ENCODE measurements at regions of chr11 and their contacts with region 1.

Region 1: GRCh38 chr11:59053387-59053786 is 32.7 kb upstream of the GLYATL1B start:
- DNase-seq: peak in 8 of 10 donors; percentile 31 to 75 (median 61)
- H3K4me3 ChIP-seq: no peak overlapping the region
- H3K27ac ChIP-seq: no peak overlapping the region
- H3K27me3 ChIP-seq: peaks cover 0 to 9% (median 0%) of the 10 kb centered on the region in 45 donors
- CTCF ChIP-seq: peak; percentile 38 to 83 (median 70)

Region 2: GRCh38 chr11:58994171-58994570 is 59.2 kb before region 1 on chr11:
- intact Hi-C with region 1: no loop called
- DNase-seq: no peak
- H3K4me3 ChIP-seq: no peak overlapping the region
- H3K27ac ChIP-seq: no peak overlapping the region
- H3K27me3 ChIP-seq: peaks cover 0 to 13% (median 0%) of the 10 kb centered on the region in 45 donors
- CTCF ChIP-seq: no peak

Region 3: DNA sequence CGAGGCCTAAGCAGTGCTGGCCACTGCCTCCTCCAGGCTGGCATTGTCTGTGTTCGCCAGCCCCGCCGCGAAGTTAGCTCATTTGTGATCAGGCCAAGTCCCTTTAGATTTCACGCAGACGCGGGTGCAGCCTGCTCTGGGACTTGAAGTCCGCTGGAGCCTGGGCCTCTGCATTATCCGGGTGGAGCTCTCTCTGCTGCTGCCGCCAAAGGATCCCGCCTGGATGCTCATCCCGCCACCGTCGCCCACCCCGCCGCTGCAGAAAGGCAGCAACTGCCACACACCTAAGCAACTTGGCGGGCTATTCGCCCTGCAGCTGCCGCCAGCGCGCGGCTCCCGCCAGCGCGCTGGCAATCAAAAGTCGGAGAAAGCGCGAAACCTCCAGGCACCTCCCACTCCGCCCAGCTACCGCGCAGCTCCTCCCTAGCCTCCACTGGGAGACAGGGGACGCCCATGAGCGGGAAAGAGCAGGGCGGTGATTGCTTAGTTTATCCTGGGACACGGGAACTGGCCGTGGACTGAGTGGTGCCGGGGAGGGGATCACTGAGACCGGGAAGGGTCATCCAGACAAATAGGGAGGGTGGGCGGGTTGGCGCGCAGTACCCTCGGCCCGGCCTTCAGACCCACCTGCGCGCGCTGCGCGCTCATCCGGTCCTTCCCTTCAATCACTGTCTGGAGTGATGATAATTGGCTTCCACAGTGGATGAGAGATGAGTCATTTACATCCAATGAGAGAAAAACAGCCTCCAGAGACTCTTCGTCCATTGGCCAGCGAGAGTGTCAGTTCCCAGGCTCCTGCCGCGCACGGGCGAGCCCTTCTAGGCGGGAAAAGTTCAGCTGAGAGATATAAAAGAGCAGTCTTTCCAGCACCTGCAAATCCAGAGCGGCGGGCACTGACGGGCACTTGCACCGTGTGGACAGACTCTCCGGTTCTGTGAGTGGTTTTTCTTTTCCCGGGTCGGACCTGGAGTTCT is 53.3 kb after region 1 on chr11 and contains the start of gene FAM111B:
- intact Hi-C with region 1: loop called in 1 of 2 experiments (anchors 10 kb)
- DNase-seq: peak; percentile 36 to 89 (median 82)
- H3K4me3 ChIP-seq: peak within 1 kb of the TSS; percentile 31 to 82 (median 65)
- H3K27ac ChIP-seq: no peak within 1 kb of the TSS
- H3K27me3 ChIP-seq: peaks cover 0 to 22% (median 3%) of the 10 kb centered on the region in 45 donors
- CTCF ChIP-seq: peak in 19 of 56 donors; percentile 5 to 52 (median 18)
- total RNA-seq, gene FAM111B: 0.14 to 2.1 (median 0.49) TPM in 21 of 120 experiments, not detected in the others

Region 4: GRCh38 chr11:59119826-59120225 is 66.4 kb after region 1 on chr11:
- intact Hi-C with region 1: no loop called
- DNase-seq: no peak
- H3K4me3 ChIP-seq: no peak overlapping the region
- H3K27ac ChIP-seq: no peak overlapping the region
- H3K27me3 ChIP-seq: peaks cover 0 to 6% (median 0%) of the 10 kb centered on the region in 45 donors
- CTCF ChIP-seq: no peak

Region 5: DNA sequence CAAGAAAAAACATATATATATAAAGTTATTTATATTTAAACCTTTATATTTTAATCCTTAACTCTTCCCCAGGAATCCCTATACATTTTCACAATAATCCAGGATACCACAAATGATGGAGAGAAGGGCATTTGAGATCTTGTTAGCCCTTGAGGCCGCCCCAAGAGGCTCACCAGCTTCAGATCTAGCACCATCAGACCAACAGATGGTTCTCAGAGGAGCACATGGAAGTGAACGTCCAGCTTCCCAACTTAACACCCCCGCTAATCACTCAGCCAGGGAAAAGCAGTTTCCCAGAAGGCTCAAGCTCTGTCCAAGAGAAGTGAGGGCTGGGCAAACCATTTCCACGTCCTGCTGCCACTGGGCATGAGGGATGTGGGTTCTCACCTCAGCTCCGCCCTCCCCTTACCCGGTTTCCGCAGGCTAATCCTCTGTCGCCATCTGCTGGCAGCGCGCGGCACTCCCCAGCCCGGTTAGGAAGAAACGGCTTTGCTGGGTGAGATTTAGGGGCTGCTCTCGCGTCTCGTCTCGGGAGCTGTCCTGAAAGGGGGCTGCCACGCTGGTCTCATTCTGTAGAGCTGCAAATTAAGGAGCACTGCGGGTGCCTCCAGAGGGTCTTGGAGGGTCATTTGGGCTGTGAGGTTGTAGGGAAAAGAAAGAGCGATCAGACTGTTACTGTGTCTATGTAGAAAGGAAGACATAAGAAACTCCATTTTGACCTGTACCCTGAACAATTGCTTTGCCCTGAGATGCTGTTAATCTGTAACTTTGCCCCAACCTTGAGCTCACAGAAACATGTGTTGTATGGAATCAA is 82.5 kb after region 1 on chr11:
- intact Hi-C with region 1: loop called in 1 of 2 experiments (anchors 10 kb)
- DNase-seq: peak; percentile 58 to 87 (median 76)
- H3K4me3 ChIP-seq: peak overlapping the region in 34 of 59 donors; percentile 8 to 51 (median 37)
- H3K27ac ChIP-seq: no peak overlapping the region
- H3K27me3 ChIP-seq: no peaks in the 10 kb centered on the region
- CTCF ChIP-seq: peak; percentile 75 to 97 (median 93)

Measured in dorsolateral prefrontal cortex (tissue), 120 donors.